IMR-90 (cell line): ENCODE measurements at regions of chr3 and their contacts with region 1.

Region 1: GRCh38 chr3:157121522-157121921 is 38.4 kb downstream of the CCNL1 start:
- DNase-seq: no peak
- ATAC-seq: 0 out of 2 replicates have a peak, but pooled peaks have one; percentile 6
- H3K4me3 ChIP-seq: no peak overlapping the region
- H3K27ac ChIP-seq: no peak overlapping the region
- H3K4me1 ChIP-seq: peaks cover 10% of the 10 kb centered on the region
- H3K27me3 ChIP-seq: no peaks in the 10 kb centered on the region
- CTCF ChIP-seq: no peak
- POLR2A ChIP-seq: no peak
- RAD21 ChIP-seq: no peak

Region 2: GRCh38 chr3:156106721-156107373 is 1014.7 kb before region 1 on chr3:
- CTCF ChIA-PET with region 1: no interaction called
- POLR2A ChIA-PET with region 1: no interaction called
- dilution Hi-C with region 1: no loop called
- in situ Hi-C with region 1: no loop called
- intact Hi-C with region 1: no loop called
- DNase-seq: no peak
- ATAC-seq: no peak
- H3K4me3 ChIP-seq: no peak overlapping the region
- H3K27ac ChIP-seq: no peak overlapping the region
- H3K4me1 ChIP-seq: no peaks in the 10 kb centered on the region
- H3K27me3 ChIP-seq: peaks cover 6% of the 10 kb centered on the region; the same call in 1 of the 2 replicates
- CTCF ChIP-seq: no peak
- POLR2A ChIP-seq: no peak
- RAD21 ChIP-seq: no peak

Region 3: GRCh38 chr3:157110761-157111278 is 10.7 kb before region 1 on chr3:
- CTCF ChIA-PET with region 1: interaction called, 3 read pairs
- POLR2A ChIA-PET with region 1: no interaction called
- dilution Hi-C with region 1: no loop called
- in situ Hi-C with region 1: no loop called
- intact Hi-C with region 1: loop called (anchors 1 kb)
- DNase-seq: no peak
- ATAC-seq: peak; percentile 36; the same call in 1 of the 2 replicates
- H3K4me3 ChIP-seq: no peak overlapping the region
- H3K27ac ChIP-seq: no peak overlapping the region
- H3K4me1 ChIP-seq: peaks cover 16% of the 10 kb centered on the region
- H3K27me3 ChIP-seq: no peaks in the 10 kb centered on the region
- CTCF ChIP-seq: no peak
- POLR2A ChIP-seq: no peak
- RAD21 ChIP-seq: no peak

Region 4: GRCh38 chr3:157204431-157204830 is 82.9 kb after region 1 on chr3:
- CTCF ChIA-PET with region 1: no interaction called
- POLR2A ChIA-PET with region 1: no interaction called
- dilution Hi-C with region 1: no loop called
- in situ Hi-C with region 1: no loop called
- intact Hi-C with region 1: no loop called
- DNase-seq: peak; percentile 67
- ATAC-seq: peak; percentile 74
- H3K4me3 ChIP-seq: no peak overlapping the region
- H3K27ac ChIP-seq: no peak overlapping the region
- H3K4me1 ChIP-seq: no peaks in the 10 kb centered on the region; the same call in 1 of the 2 replicates
- H3K27me3 ChIP-seq: no peaks in the 10 kb centered on the region
- CTCF ChIP-seq: peak; percentile 77
- POLR2A ChIP-seq: no peak
- RAD21 ChIP-seq: peak; percentile 76